Psoas muscle (tissue), 8 donors: ENCODE measurements at regions of chr3 and their contacts with region 1.

Region 1: GRCh38 chr3:48088749-48089466 is 72.7 kb upstream of the MAP4 start:
- DNase-seq: peak; percentile 97 to 98
- ATAC-seq: peak; percentile 86 to 95 (median 88)
- H3K4me3 ChIP-seq: peak overlapping the region; percentile 97
- H3K27ac ChIP-seq: peak overlapping the region; percentile 99
- H3K4me1 ChIP-seq: peaks cover 39% of the 10 kb centered on the region
- H3K27me3 ChIP-seq: no peaks in the 10 kb centered on the region
- CTCF ChIP-seq: no peak

Region 2: DNA sequence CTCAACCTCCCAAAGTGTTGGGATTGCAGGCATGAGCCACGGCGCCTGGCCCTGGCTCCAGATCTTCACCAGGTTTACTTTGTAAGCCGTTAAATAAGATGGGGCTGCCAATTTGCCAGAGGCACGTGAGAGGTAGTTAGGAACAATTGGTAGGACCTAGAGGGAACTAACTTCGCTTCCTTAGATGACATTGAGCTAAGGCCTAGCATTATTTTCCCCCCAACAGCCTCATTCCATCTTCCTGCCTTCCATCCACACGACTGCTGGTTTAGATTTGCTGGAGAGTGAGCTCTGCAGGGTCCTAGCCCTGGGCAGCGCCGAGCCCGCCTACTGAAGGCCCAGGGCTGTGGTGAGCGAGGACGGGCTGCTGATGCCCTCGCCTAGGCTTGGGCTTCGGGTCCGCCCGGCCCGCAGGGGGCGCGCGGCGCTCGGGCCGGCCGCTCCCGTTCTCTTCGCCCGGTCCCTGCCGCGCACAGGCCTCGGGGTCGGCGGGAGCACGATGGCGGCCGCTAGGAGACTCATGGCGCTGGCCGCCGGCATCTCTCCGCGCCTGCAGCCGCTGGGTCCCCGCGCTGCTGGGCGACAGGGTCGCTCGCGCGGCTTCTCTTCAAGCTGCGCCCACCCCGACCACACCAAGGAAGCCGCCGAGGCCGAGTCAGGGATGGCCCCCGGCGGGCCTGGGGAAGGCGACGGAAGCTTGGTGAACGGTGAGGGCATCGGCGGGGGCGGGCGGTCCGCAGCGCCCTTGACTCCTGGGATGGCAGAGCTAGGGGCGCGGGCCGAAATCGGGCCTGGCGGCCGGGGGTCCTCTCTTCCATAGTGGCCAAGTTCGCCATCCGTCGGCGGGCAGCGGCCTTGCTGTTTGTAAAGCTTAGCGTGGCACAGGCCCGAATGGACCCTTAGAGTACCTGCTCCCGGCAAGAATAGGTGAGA is 264.1 kb before region 1 on chr3:
- intact Hi-C with region 1: loop called in 1 of 2 experiments (anchors 10 kb)
- DNase-seq: peak; percentile 83 to 89
- ATAC-seq: peak; percentile 98 to 100 (median 99)
- H3K4me3 ChIP-seq: peak overlapping the region; percentile 93
- H3K27ac ChIP-seq: peak overlapping the region; percentile 85
- H3K4me1 ChIP-seq: peaks cover 13% of the 10 kb centered on the region
- H3K27me3 ChIP-seq: no peaks in the 10 kb centered on the region
- CTCF ChIP-seq: peak; percentile 84

Region 3: DNA sequence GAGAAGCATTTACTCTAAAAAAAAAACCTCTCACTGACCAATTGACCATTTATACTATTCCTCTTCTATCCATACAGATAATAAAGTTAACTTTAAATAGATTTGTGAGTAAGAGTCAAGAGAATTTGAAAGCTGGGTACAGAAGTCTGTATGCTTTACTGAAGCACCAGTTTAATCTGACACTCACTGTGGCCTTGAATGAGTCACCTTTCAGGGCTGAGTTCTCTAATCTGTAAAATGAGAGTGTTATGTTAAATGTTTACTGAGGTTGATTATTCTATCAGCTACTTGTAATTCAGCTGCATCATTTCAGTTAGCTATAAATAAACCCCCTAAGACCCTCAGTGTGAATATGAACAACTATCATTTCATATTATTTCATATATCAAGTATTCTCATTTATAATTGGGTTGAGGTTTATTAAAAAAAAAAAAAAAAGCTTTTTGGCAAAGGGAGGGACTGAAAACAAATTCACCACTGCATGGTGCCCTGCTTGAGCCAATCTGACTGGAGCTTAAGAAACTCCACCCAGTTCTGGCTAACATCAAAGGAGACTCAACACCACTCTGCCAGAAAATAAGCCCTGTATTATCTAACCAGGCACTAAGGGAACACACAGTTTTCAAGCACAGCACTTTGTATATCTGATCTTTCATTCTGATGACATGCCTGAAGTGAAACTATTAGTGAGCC is 75.5 kb before region 1 on chr3:
- intact Hi-C with region 1: loop called (anchors 2 to 5 kb)
- DNase-seq: no peak
- ATAC-seq: peak; percentile 84 to 86 (median 86)
- H3K4me3 ChIP-seq: peak overlapping the region; percentile 65
- H3K27ac ChIP-seq: peak overlapping the region; percentile 88
- H3K4me1 ChIP-seq: peaks cover 63% of the 10 kb centered on the region
- H3K27me3 ChIP-seq: no peaks in the 10 kb centered on the region
- CTCF ChIP-seq: no peak

Region 4: GRCh38 chr3:48039487-48040190 is 49.3 kb before region 1 on chr3:
- intact Hi-C with region 1: loop called in 1 of 2 experiments (anchors 5 kb)
- DNase-seq: no peak
- ATAC-seq: peak; percentile 61 to 70 (median 66)
- H3K4me3 ChIP-seq: peak overlapping the region; percentile 30
- H3K27ac ChIP-seq: peak overlapping the region; percentile 78
- H3K4me1 ChIP-seq: peaks cover 68% of the 10 kb centered on the region
- H3K27me3 ChIP-seq: no peaks in the 10 kb centered on the region
- CTCF ChIP-seq: no peak

Region 5: GRCh38 chr3:48151058-48151806 is 62.3 kb after region 1 on chr3:
- intact Hi-C with region 1: loop called in 1 of 2 experiments (anchors 5 kb)
- DNase-seq: peak; percentile 68 to 88
- ATAC-seq: peak; percentile 98 to 100 (median 98)
- H3K4me3 ChIP-seq: no peak overlapping the region
- H3K27ac ChIP-seq: peak overlapping the region; percentile 32
- H3K4me1 ChIP-seq: peaks cover 8% of the 10 kb centered on the region
- H3K27me3 ChIP-seq: no peaks in the 10 kb centered on the region
- CTCF ChIP-seq: peak; percentile 87